Activated T-helper 1 cell treated with anti-CD3 and anti-CD28 coated beads, Interleukin-12 subunit alpha, Interleukin-12 subunit beta, Interleukin-2, Interleukin-4 antibody, amounts not matched to agents 30 ng/mL and 10 ng/mL and 1 ng/mL, durations not matched to agents 14 hours and 24 hours and 36 hours (primary cell): ENCODE measurements at regions of chr1 and their contacts with region 1.

Region 1: DNA sequence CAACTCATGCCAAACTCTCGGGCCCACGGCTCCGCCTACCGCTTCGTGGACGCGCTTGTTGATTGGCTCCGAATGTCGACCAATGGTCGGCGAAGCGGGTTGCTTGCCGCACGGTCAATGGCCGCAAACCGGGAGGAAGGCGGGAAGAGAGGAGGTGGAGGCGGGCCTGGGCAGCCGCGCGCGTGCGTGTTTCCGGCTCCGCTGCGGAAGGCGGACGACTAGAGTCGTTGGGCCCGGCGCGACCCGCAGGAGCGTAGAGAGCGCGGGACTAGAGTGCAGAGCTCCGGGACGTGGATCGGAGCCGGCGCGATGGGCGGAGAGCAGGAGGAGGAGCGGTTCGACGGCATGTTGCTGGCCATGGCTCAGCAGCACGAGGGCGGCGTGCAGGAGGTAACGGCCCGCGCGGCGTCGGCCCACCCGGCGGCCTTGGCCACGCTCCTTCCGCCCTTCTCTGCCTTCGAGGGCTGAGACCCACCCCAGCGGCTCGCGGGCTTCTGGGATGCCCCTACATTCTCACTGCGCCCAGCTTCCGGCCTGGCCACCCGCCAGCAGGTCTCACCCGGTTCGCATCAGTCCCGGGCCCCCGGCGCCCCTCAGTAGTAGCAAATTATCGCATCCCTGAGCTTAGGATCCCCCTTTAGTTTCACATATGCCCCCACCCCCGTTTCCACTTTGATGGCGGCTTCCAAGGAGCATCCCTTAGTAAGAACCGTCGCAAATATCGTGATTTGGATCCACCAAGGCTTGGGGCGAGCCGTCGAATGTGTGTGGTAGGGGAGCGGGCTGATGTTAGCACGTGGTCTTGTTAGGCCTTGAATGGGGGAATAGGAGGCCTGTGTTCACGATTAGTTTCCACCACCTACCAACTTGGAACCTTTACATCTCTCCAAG is at the start of gene NUDC:
- DNase-seq: peak; percentile 97
- H3K4me3 Mint-ChIP-seq: peak within 1 kb of the TSS; percentile 97
- H3K27ac Mint-ChIP-seq: peak within 1 kb of the TSS; percentile 96
- H3K4me1 Mint-ChIP-seq: peaks cover 31% of the 10 kb centered on the region
- H3K27me3 Mint-ChIP-seq: peaks cover 2% of the 10 kb centered on the region
- total RNA-seq, gene NUDC: 151 and 152 TPM in 2 replicates

Region 2: DNA sequence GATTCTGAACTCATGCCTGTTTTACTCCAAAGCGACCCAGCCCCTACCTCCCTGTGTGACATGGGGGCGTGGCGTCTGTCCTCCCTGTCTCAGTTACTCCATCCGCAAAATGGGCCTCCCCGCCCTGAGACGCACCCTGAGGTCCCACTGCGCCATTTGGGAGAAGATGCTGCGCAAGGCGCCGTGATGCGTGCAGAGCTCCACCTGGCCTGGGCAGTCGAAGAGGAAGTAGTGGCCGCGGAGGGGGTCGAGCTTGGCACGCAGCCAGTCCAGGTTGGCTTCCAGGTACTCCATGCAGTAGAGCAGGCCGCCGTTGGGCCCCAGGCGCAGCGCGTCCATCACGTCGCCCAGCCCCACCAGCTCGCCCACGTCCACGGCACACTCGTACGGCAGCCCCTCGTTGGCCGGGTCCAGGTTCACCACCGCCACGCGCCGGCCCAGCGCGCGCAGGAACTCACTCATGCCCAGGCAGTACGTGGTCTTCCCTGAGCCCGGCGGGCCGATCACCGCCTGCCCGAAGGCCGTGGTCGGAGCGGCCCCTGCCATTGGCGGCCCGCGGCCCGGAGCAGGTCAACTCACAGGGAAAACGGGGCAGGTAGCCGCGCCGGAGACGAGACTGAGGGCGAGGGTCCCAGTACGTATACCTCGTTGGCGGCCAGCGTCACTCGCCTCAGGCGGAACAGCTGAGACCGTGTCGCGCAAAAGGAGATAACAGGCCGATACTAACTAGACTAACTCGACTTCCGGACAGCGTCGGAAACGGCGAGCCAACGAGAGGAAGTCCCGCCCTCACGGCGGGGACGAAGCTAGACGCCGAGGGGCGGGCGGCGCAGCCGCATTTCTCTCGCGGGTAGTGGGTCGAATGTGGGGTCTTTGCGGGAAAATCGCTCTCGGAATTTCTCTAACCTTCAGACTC is 32.0 kb before region 1 on chr1 and contains the start of gene GPN2:
- intact Hi-C with region 1: loop called (anchors 1 kb)
- DNase-seq: peak; percentile 80
- H3K4me3 Mint-ChIP-seq: peak within 1 kb of the TSS; percentile 99
- H3K27ac Mint-ChIP-seq: peak within 1 kb of the TSS; percentile 95
- H3K4me1 Mint-ChIP-seq: peaks cover 26% of the 10 kb centered on the region
- H3K27me3 Mint-ChIP-seq: no peaks in the 10 kb centered on the region
- total RNA-seq, gene GPN2: 46.4 and 51.9 TPM in 2 replicates

Region 3: DNA sequence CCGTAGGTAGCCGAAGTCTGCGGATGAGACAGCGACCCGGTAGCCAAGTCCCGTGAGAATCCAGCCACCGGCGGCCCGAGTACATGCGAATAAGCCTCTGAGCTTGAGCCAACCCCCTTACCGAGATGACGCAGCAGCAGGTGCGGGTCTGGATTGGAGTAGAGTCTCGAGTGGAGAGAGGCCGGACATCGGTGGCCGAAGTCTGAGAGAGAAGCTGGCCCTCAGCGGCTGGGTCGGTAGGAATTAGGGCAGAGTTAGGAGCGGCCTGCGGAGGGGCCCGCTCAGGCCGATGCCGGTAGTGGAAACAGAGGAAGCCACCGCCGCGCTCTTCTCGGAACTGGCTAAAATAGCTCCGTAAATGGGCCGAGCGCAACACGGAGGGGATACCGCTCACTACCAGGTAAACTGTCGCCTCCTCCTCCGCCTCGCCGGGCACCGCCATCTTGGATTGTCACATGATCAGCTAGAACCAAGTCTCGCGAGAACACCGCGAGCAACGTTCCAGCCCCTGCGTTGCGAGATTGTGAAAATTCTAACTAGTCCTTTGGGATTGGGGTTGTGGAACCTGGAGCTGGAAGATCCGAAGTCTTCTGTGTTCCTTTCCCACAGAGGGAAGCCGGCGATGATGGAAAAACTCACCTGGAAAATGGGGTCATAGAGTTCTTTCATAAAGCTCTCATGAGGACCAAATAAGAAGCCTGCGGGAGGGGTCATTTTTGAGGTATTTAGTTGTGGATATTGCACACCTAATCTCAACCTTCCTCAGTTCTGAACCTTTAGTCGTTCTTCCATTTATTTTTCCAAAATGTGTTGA is 21.6 kb before region 1 on chr1 and contains the start of gene GPATCH3:
- intact Hi-C with region 1: loop called (anchors 1 kb)
- DNase-seq: peak; percentile 81
- H3K4me3 Mint-ChIP-seq: peak within 1 kb of the TSS; percentile 93
- H3K27ac Mint-ChIP-seq: peak within 1 kb of the TSS; percentile 96
- H3K4me1 Mint-ChIP-seq: peaks cover 27% of the 10 kb centered on the region
- H3K27me3 Mint-ChIP-seq: peaks cover 2% of the 10 kb centered on the region
- total RNA-seq, gene GPATCH3: 15.6 and 15.7 TPM in 2 replicates

Region 4: DNA sequence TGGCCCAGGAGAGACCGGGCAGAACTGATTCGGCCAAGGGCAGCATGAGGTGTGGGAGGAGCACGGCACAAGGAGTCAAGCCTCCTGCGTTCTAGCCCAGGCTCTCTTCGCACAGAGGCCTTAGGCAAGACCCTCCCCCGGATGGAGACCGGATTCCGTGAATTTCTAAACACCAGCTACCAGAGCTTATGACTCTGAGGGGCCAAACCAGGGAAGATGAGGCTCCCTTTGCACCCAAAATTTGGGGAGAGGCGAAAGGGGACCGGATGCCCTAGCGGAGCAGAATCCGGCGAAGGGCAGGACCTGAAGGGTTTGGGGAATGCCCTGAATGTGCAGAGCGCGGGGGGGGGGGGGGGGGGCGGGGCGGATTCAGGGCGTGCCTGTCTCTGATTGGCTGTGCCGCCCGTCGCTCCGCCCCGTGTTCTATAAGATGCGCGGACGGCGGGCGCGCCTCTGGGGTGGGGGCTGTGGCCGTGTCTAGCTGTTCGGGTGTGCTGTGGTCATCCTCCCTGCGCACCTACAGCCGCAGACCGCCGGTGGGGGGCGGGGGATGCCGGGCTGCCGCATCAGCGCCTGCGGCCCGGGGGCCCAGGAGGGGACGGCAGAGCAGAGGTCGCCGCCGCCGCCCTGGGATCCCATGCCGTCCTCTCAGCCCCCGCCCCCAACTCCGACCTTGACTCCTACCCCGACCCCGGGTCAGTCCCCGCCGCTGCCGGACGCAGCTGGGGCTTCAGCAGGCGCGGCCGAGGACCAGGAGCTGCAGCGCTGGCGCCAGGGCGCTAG is 71.6 kb after region 1 on chr1 and contains the start of gene TRNP1:
- intact Hi-C with region 1: loop called (anchors 1 kb)
- DNase-seq: peak; percentile 69
- H3K4me3 Mint-ChIP-seq: peak within 1 kb of the TSS; percentile 81
- H3K27ac Mint-ChIP-seq: peak within 1 kb of the TSS; percentile 21
- H3K4me1 Mint-ChIP-seq: peaks cover 21% of the 10 kb centered on the region
- H3K27me3 Mint-ChIP-seq: peaks cover 55% of the 10 kb centered on the region
- total RNA-seq, gene TRNP1: 2.0 TPM in 2 replicates

Region 5: DNA sequence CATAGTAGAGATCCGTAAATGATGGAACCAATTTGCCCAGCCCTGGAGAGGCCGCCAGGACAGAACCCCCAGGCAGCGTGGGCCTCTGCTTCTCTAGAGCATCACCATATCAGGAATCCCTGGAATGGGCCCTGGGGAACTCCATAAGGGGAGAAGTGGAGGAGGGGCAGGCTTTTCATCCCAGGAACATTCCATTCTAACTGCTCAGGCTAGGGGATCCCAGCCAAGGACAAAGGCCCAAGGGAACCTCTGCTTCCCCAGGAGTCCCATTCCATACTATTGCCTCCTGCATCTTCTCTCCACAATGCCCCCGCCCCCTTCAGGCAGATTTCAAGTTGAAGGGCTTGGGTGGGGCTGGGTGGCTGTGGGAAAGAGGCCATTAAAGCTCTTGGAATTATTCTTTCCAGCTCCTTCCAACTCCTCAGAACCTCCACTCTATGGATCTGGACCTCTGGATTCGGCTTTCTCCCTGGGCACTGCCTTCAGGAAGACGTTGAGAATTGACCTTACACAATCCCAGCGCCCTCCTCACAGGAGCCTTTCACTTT is 77.7 kb after region 1 on chr1:
- intact Hi-C with region 1: loop called (anchors 1 kb)
- DNase-seq: no peak
- H3K4me3 Mint-ChIP-seq: no peak overlapping the region
- H3K27ac Mint-ChIP-seq: no peak overlapping the region
- H3K4me1 Mint-ChIP-seq: peaks cover 9% of the 10 kb centered on the region
- H3K27me3 Mint-ChIP-seq: peaks cover 40% of the 10 kb centered on the region

Region 6: GRCh38 chr1:27365372-27366112 is 443.8 kb after region 1 on chr1:
- intact Hi-C with region 1: loop called (anchors 1 kb)
- DNase-seq: peak; percentile 60
- H3K4me3 Mint-ChIP-seq: peak overlapping the region; percentile 90
- H3K27ac Mint-ChIP-seq: peak overlapping the region; percentile 86
- H3K4me1 Mint-ChIP-seq: peaks cover 38% of the 10 kb centered on the region
- H3K27me3 Mint-ChIP-seq: no peaks in the 10 kb centered on the region